Activated CD4-positive, alpha-beta T cell treated with anti-CD3 and anti-CD28 coated beads for 36 hours (primary cell): ENCODE measurements at regions of chr18 and their contacts with region 1.

Region 1: GRCh38 chr18:55494899-55495298 is 93.1 kb downstream of the TCF4 start:
- DNase-seq: no peak
- ATAC-seq: no peak
- H3K4me3 Mint-ChIP-seq: no peak overlapping the region
- H3K27ac Mint-ChIP-seq: no peak overlapping the region
- H3K4me1 Mint-ChIP-seq: peaks cover under 1% of the 10 kb centered on the region
- H3K27me3 Mint-ChIP-seq: peaks cover 23% of the 10 kb centered on the region

Region 2: DNA sequence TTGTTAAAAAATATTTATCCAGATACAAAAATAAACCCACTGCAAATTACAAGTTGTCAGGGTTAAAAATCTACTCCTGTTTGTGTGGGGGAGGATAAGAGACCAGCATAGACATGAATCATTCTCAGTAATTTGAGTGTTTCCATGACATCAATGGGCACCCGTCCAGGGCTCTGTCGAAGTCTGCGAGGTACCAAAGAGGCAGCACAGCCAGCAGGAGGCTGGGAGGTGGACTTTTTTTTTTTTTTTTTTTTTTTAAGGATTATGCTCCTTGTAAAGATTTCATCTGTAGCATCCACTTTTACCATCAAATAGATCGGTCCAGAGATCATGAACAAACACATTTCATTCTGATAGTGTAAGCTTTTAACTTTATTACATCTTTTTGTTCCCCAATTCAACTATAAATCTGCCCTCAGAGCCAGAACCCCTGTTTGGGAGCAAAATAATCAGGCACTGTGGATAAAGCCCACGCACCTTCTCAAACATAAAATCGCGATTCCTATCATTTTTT is 88.9 kb before region 1 on chr18:
- CTCF ChIA-PET with region 1: no interaction called
- POLR2A ChIA-PET with region 1: no interaction called
- intact Hi-C with region 1: no loop called
- DNase-seq: peak; percentile 62
- ATAC-seq: no peak
- H3K4me3 Mint-ChIP-seq: no peak overlapping the region
- H3K27ac Mint-ChIP-seq: no peak overlapping the region
- H3K4me1 Mint-ChIP-seq: peaks cover 2% of the 10 kb centered on the region
- H3K27me3 Mint-ChIP-seq: peaks cover 11% of the 10 kb centered on the region

Region 3: GRCh38 chr18:55420665-55421307 is 74.1 kb before region 1 on chr18:
- CTCF ChIA-PET with region 1: no interaction called
- POLR2A ChIA-PET with region 1: no interaction called
- intact Hi-C with region 1: no loop called
- DNase-seq: no peak
- ATAC-seq: no peak
- H3K4me3 Mint-ChIP-seq: no peak overlapping the region
- H3K27ac Mint-ChIP-seq: no peak overlapping the region
- H3K4me1 Mint-ChIP-seq: peaks cover 6% of the 10 kb centered on the region
- H3K27me3 Mint-ChIP-seq: peaks cover 11% of the 10 kb centered on the region

Region 4: DNA sequence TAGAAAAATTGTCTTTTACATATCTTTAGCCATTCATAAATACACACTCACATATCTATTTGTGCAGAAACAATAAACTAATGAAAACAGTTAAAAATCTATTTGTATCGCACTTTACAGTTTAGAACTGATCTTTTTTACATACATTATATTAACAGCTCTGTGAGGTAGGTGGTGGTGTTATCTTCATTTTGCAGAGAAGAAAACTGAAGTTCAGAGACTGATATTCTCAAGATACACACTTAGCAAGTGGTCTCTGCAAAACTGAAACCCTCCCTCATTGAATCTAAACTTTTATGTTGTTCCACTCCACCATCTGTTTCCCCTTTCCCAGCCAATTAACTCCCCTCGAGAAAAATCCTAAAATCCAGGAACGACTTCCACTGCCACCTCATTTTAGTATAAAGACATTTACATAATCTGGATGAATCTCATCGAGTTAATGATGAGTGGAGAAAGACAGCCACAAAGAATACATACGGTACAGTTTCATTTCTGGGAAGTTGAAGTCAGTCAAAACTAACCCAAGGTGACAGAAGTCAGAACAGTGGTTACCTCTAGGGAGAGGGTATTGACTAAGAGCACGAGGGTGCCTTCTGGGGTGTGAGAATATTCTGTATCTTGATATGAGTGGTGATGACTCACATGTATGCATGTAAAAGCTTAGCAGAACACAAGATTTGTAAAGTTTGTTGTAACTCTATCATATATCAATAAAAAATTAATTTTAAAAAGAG is 617.3 kb after region 1 on chr18:
- CTCF ChIA-PET with region 1: no interaction called
- POLR2A ChIA-PET with region 1: no interaction called
- intact Hi-C with region 1: loop called in 1 of 2 experiments (anchors 5 kb)
- DNase-seq: peak; percentile 55
- ATAC-seq: peak; percentile 98
- H3K4me3 Mint-ChIP-seq: peak overlapping the region; percentile 4
- H3K27ac Mint-ChIP-seq: peak overlapping the region; percentile 41
- H3K4me1 Mint-ChIP-seq: peaks cover 6% of the 10 kb centered on the region
- H3K27me3 Mint-ChIP-seq: peaks cover 18% of the 10 kb centered on the region